ENCODE measurements at regions of chr18 and their contacts with region 1.

Region 1: GRCh38 chr18:47215554-47216138 is 35.8 kb downstream of the SKOR2 start:
- DNase-seq: peak; percentile 19
- ATAC-seq: no peak
- H3K4me3 ChIP-seq: no peak overlapping the region
- H3K4me3 Mint-ChIP-seq: no peak overlapping the region
- H3K27ac ChIP-seq: no peak overlapping the region
- H3K27ac Mint-ChIP-seq: no peak overlapping the region
- H3K4me1 ChIP-seq: no peaks in the 10 kb centered on the region
- H3K4me1 Mint-ChIP-seq: no peaks in the 10 kb centered on the region
- H3K27me3 ChIP-seq: peaks cover 0 to 19% (median 4%) of the 10 kb centered on the region in 4 experiments
- H3K27me3 Mint-ChIP-seq: peaks cover 49% of the 10 kb centered on the region
- CTCF ChIP-seq: peak; percentile 57

Region 2: DNA sequence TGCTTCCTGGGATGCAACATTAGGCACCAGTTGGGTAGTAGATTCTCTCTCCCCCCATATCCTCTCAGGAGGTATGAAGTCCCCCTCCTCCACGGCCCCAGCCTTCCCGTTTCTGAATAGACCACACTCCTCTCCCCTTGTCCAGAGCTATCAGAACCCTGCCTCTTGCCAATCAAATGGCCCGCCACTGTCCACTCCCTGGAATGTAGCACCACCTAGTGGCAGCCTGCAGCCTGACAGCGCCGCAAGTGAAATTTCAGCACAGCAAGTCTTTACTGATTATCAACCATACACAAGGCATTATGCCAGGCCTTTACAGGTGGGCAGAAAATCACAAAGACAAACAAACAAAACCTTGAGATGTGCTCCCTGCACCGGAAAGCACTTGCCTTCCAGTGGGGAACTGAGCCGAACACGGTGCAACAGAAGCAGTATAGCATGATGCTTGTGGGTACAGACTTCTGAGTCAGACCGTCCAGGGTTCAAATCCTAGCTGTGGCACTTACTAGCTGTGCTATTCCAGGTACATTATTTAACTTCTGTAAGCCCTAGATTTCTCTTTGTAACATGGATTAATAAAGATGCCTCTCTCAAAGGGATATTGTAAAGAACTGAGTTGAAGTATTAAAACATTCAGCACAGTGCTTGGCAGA is 540.8 kb after region 1 on chr18:
- CTCF ChIA-PET with region 1: interaction called, 12 read pairs
- POLR2A ChIA-PET with region 1: no interaction called
- intact Hi-C with region 1: no loop called
- DNase-seq: peak; percentile 44
- ATAC-seq: peak; percentile 54
- H3K4me3 ChIP-seq: no peak overlapping the region
- H3K4me3 Mint-ChIP-seq: no peak overlapping the region
- H3K27ac ChIP-seq: no peak overlapping the region
- H3K27ac Mint-ChIP-seq: no peak overlapping the region
- H3K4me1 ChIP-seq: no peaks in the 10 kb centered on the region
- H3K4me1 Mint-ChIP-seq: no peaks in the 10 kb centered on the region
- H3K27me3 ChIP-seq: peaks cover 0 to 32% (median 11%) of the 10 kb centered on the region in 4 experiments
- H3K27me3 Mint-ChIP-seq: peaks cover 27% of the 10 kb centered on the region
- CTCF ChIP-seq: peak; percentile 86

Region 3: GRCh38 chr18:47953471-47953931 is 737.9 kb after region 1 on chr18:
- CTCF ChIA-PET with region 1: no interaction called
- POLR2A ChIA-PET with region 1: no interaction called
- intact Hi-C with region 1: no loop called
- DNase-seq: peak; percentile 58
- ATAC-seq: peak; percentile 92
- H3K4me3 ChIP-seq: peak overlapping the region in 2 of 5 experiments; percentile 0 to 37
- H3K4me3 Mint-ChIP-seq: peak overlapping the region; percentile 70
- H3K27ac ChIP-seq: no peak overlapping the region
- H3K27ac Mint-ChIP-seq: peak overlapping the region; percentile 33
- H3K4me1 ChIP-seq: peaks cover 15 to 19% of the 10 kb centered on the region in 2 donors
- H3K4me1 Mint-ChIP-seq: peaks cover 16% of the 10 kb centered on the region
- H3K27me3 ChIP-seq: peaks cover 0 to 23% (median 18%) of the 10 kb centered on the region in 4 experiments
- H3K27me3 Mint-ChIP-seq: peaks cover 32% of the 10 kb centered on the region
- CTCF ChIP-seq: no peak

Measured in B cell (primary cell).